A549 (cell line): ENCODE measurements at regions of chr2 and their contacts with region 1.

Region 1: GRCh38 chr2:25362049-25362433 is 20.3 kb upstream of the DNMT3A start:
- DNase-seq: peak; percentile 94 to 98
- ATAC-seq: peak; percentile 93 to 98
- H3K4me3 ChIP-seq: peak overlapping the region; percentile 30
- H3K27ac ChIP-seq: peak overlapping the region; percentile 58 to 79
- H3K4me1 ChIP-seq: peaks cover 7% of the 10 kb centered on the region; the same call in 2 of the 3 replicates
- CTCF ChIP-seq: peak; percentile 98
- EP300 ChIP-seq: no peak
- POLR2A ChIP-seq: peak; percentile 80
- RAD21 ChIP-seq: peak; percentile 44 to 62

Region 2: GRCh38 chr2:25331686-25332365 is 30.2 kb before region 1 on chr2:
- CTCF ChIA-PET with region 1: interaction called, 15 read pairs
- POLR2A ChIA-PET with region 1: no interaction called
- DNase-seq: no peak
- ATAC-seq: no peak
- H3K4me3 ChIP-seq: no peak overlapping the region
- H3K27ac ChIP-seq: no peak overlapping the region
- H3K4me1 ChIP-seq: no peaks in the 10 kb centered on the region
- CTCF ChIP-seq: no peak
- EP300 ChIP-seq: no peak
- POLR2A ChIP-seq: no peak
- RAD21 ChIP-seq: no peak

Region 3: GRCh38 chr2:25342372-25343186 is 19.5 kb before region 1 on chr2:
- CTCF ChIA-PET with region 1: interaction called, 44 read pairs
- POLR2A ChIA-PET with region 1: interaction called, 5 read pairs
- DNase-seq: peak; percentile 84 to 92
- ATAC-seq: peak; percentile 82 to 96
- H3K4me3 ChIP-seq: peak overlapping the region; percentile 70
- H3K27ac ChIP-seq: peak overlapping the region; percentile 90 to 99
- H3K4me1 ChIP-seq: peaks cover 15% of the 10 kb centered on the region
- CTCF ChIP-seq: peak; percentile 72
- EP300 ChIP-seq: no peak
- POLR2A ChIP-seq: no peak
- RAD21 ChIP-seq: peak; percentile 70 to 79

Region 4: DNA sequence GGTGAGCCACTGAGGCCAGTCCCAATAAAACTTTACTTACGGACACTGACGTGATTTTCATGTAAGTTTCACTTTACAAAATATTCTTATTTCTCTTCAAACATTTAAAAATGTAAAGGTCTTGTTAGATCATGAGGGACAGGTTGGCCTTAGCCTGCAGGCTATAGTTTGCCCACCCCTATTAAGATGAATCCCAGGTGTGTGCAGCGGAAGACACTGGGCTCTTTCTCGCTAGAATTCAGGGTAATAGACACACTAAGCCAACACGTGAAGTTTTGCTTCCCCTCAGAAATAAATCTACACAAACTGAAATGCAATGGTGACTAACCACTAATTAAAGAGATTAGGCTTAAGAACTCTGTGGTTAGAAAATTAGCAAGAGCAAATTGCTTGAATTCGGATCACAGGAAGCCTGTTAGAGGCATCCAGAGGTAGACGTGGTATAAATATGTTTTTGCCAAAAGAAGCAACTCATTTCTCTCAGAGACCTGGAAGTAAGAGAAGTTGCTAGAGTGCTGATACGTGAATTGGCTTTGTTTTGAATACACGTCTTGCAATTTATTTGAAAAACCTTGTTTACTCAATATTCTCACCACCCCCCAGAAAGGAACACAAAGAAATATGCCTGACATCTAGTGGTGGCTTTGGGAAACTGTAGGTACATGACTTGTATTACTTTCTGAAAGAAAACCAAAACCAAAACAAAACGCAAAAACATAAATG is 159.8 kb after region 1 on chr2:
- CTCF ChIA-PET with region 1: interaction called, 12 read pairs
- POLR2A ChIA-PET with region 1: interaction called, 3 read pairs
- DNase-seq: peak; percentile 28 to 76
- ATAC-seq: peak; percentile 88 to 93
- H3K4me3 ChIP-seq: no peak overlapping the region
- H3K27ac ChIP-seq: no peak overlapping the region
- H3K4me1 ChIP-seq: peaks cover 10% of the 10 kb centered on the region
- CTCF ChIP-seq: peak; percentile 98
- EP300 ChIP-seq: no peak
- POLR2A ChIP-seq: no peak
- RAD21 ChIP-seq: peak; percentile 90 to 95

Region 5: DNA sequence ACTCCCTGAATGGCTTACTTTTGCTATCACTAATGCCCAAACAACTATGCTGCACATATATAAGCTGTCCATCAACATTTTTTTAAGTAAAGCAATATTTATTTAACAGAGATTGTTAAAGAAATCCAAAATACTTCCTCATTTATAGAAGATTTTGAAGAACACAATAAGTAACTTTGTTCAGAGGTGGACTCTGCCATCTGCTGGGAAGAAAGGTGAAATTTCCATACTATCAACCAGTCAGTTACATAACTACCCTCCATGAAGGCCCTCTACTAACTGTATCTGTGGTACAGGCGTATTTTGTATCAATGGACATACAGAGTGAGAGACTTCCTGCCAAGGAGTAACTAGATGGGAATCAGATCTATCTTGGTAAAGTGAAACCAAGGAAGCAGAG is 205.4 kb after region 1 on chr2:
- CTCF ChIA-PET with region 1: interaction called, 12 read pairs
- POLR2A ChIA-PET with region 1: no interaction called
- DNase-seq: peak; percentile 40 to 59
- ATAC-seq: peak; percentile 84 to 89; a peak in 5 of 6 replicates
- H3K4me3 ChIP-seq: no peak overlapping the region
- H3K27ac ChIP-seq: no peak overlapping the region
- H3K4me1 ChIP-seq: no peaks in the 10 kb centered on the region
- CTCF ChIP-seq: peak; percentile 82
- EP300 ChIP-seq: no peak
- POLR2A ChIP-seq: no peak
- RAD21 ChIP-seq: peak; percentile 70 to 76